Activated T-helper 2 cell treated with anti-CD3 and anti-CD28 coated beads, Interferon-gamma antibody, Interleukin-2, Interleukin-4, amounts not matched to agents 10 μg/mL and 5 μg/mL and 100 μg/mL, durations not matched to agents 14 hours and 24 hours and 36 hours (primary cell): ENCODE measurements at regions of chr6 and their contacts with region 1.

Region 1: GRCh38 chr6:137873273-137873762 is 6.3 kb downstream of the TNFAIP3 start:
- DNase-seq: peak; percentile 44
- H3K4me3 Mint-ChIP-seq: peak overlapping the region; percentile 96
- H3K27ac Mint-ChIP-seq: peak overlapping the region; percentile 96
- H3K4me1 Mint-ChIP-seq: peaks cover 52% of the 10 kb centered on the region
- H3K27me3 Mint-ChIP-seq: no peaks in the 10 kb centered on the region

Region 2: GRCh38 chr6:137641474-137642077 is 231.7 kb before region 1 on chr6:
- intact Hi-C with region 1: no loop called
- DNase-seq: peak; percentile 50
- H3K4me3 Mint-ChIP-seq: no peak overlapping the region
- H3K27ac Mint-ChIP-seq: no peak overlapping the region
- H3K4me1 Mint-ChIP-seq: peaks cover 17% of the 10 kb centered on the region
- H3K27me3 Mint-ChIP-seq: peaks cover 14% of the 10 kb centered on the region

Region 3: GRCh38 chr6:137883400-137884148 is 10.3 kb after region 1 on chr6:
- intact Hi-C with region 1: loop called (anchors 1 kb)
- DNase-seq: no peak
- H3K4me3 Mint-ChIP-seq: no peak overlapping the region
- H3K27ac Mint-ChIP-seq: peak overlapping the region; percentile 91
- H3K4me1 Mint-ChIP-seq: peaks cover 53% of the 10 kb centered on the region
- H3K27me3 Mint-ChIP-seq: no peaks in the 10 kb centered on the region

Region 4: GRCh38 chr6:137975188-137975940 is 102.0 kb after region 1 on chr6:
- intact Hi-C with region 1: loop called (anchors 1 kb)
- DNase-seq: peak; percentile 26
- H3K4me3 Mint-ChIP-seq: peak overlapping the region; percentile 72
- H3K27ac Mint-ChIP-seq: peak overlapping the region; percentile 93
- H3K4me1 Mint-ChIP-seq: peaks cover 57% of the 10 kb centered on the region
- H3K27me3 Mint-ChIP-seq: no peaks in the 10 kb centered on the region